ENCODE measurements at regions of chr1 and their contacts with region 1.

Region 1: DNA sequence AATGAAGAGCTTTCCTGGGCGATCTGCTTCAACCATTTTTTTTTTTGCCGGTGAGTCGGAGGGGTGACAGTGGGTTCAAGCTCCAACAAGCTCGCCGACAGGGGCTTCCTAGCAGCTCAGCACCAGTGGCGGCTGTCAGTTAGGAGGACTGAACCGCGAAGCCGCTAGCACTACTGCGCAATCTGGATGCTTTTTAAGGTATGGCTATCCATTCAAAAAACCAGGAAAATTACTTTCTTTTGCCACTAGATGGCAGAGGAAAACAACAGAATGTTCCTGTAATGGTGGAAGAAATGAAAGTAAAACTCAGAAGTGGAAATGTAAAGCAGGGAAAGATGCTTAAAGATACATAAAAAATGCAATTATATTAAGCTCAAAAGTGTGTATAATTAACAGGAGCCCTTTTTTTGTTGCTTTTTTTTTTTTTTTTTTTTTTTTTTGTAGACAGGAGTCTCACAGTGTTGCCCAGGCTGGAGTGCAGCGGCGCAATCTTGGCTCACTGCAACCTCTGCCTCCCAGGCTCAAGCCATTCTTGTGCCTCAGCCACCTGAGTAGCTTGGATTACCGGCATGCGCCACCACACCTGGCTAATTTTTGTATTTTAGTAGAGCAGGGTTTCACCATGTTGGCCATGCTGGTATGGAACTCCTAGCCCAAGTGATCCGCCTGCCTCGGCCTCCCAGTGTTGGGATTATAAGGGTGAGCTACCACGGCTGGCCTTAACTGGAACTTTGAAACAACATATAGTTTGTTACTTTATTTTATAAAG is 8.5 kb downstream of the KYAT3 start:
- DNase-seq: peak; percentile 32
- H3K4me3 Mint-ChIP-seq: peak overlapping the region; percentile 61
- H3K27ac Mint-ChIP-seq: peak overlapping the region; percentile 65
- H3K4me1 Mint-ChIP-seq: peaks cover 83% of the 10 kb centered on the region
- H3K27me3 Mint-ChIP-seq: no peaks in the 10 kb centered on the region

Region 2: DNA sequence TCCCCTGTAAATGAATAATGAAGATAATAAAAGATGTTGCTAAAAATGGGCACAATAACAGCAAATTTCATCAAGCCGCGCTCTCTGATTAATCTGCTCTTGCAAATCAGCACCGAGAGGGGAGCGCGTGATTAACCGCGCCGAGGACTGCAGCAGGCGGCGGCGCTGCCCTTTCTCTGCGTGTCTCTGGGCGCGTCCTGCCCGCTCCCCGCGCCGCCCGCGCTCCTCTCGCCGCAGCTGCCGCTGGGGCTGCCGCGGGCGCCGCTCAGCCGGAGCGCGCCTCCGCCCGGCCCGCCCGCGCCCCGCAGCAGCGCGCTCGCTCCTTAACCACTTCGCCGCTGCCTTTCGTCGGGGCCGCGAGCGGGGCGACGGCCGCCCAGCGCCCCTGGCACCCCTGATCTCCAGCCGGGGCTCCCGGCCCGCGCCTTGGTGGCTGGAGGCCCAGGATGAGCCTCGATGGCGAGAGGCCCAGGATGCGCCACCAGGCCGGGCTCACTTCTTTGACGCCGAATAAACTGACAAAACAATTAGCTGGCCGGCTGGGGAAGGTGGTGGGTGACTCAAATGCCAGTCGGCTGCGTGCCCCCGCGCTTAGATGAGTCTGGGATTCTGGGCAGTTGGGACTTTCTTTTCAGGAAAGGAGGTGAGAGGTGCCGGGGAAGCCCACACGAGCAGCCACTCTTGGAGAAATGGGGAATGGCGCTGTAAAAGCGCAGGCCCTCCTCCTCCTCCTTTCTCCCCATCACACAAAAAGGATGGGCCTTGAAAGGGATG is 521.3 kb before region 1 on chr1:
- CTCF ChIA-PET with region 1: no interaction called
- POLR2A ChIA-PET with region 1: no interaction called
- DNase-seq: no peak
- H3K4me3 Mint-ChIP-seq: no peak overlapping the region
- H3K27ac Mint-ChIP-seq: no peak overlapping the region
- H3K4me1 Mint-ChIP-seq: no peaks in the 10 kb centered on the region
- H3K27me3 Mint-ChIP-seq: peaks cover 29% of the 10 kb centered on the region

Region 3: DNA sequence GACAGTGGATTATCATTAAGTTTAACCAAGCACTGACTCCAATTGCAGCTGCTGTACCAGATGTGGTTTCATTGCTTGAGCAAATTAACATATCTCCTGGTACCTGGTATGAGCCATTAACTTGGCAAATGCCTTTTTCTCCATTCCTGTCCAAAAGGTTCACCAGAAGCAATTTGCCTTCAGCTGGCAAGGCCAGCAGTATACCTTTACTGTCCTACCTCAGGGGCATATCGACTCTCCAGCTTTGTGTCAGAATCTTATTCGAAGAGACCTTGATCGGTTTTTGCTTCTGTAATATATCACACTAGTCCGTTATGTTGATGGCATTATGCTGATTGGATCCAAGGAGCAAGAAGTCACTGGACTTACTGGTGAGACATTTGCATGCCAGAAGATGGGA is 83.1 kb before region 1 on chr1:
- CTCF ChIA-PET with region 1: no interaction called
- POLR2A ChIA-PET with region 1: no interaction called
- DNase-seq: no peak
- H3K4me3 Mint-ChIP-seq: no peak overlapping the region
- H3K27ac Mint-ChIP-seq: no peak overlapping the region
- H3K4me1 Mint-ChIP-seq: no peaks in the 10 kb centered on the region
- H3K27me3 Mint-ChIP-seq: no peaks in the 10 kb centered on the region

Region 4: GRCh38 chr1:88961647-88962275 is 22.2 kb before region 1 on chr1:
- CTCF ChIA-PET with region 1: no interaction called
- POLR2A ChIA-PET with region 1: no interaction called
- DNase-seq: no peak
- H3K4me3 Mint-ChIP-seq: no peak overlapping the region
- H3K27ac Mint-ChIP-seq: no peak overlapping the region
- H3K4me1 Mint-ChIP-seq: no peaks in the 10 kb centered on the region
- H3K27me3 Mint-ChIP-seq: no peaks in the 10 kb centered on the region

Region 5: DNA sequence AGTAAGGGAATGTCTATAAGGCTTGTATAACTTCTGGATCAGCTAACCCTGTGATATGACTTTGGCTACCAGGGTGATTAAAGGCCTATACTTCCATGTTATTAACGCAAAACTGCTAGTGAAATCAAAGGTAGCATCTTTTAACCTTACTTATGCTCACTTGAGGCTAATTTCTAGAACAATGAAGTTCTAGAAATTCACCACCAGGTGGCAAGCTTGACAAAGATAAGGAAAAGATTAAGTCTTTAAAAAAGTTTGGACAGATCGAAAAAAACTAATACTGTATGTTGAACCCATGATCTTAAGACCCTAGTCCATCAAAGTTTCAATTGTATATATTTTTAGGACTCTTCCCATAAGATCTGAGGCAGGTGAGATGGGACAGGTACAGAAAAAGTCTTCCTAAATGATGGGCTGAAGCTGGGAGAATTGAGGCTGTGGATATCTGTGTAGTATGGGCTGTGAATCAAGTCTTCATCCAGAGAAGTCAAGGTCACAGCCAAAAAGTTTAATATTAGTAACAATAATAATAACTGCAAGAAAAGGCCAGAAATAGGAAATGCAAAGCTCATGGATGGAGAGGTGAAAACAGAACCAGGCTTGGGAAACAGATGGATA is 10.3 kb before region 1 on chr1:
- CTCF ChIA-PET with region 1: interaction called, 70 read pairs
- POLR2A ChIA-PET with region 1: no interaction called
- DNase-seq: no peak
- H3K4me3 Mint-ChIP-seq: no peak overlapping the region
- H3K27ac Mint-ChIP-seq: peak overlapping the region; percentile 5
- H3K4me1 Mint-ChIP-seq: peaks cover 36% of the 10 kb centered on the region
- H3K27me3 Mint-ChIP-seq: no peaks in the 10 kb centered on the region

Region 6: DNA sequence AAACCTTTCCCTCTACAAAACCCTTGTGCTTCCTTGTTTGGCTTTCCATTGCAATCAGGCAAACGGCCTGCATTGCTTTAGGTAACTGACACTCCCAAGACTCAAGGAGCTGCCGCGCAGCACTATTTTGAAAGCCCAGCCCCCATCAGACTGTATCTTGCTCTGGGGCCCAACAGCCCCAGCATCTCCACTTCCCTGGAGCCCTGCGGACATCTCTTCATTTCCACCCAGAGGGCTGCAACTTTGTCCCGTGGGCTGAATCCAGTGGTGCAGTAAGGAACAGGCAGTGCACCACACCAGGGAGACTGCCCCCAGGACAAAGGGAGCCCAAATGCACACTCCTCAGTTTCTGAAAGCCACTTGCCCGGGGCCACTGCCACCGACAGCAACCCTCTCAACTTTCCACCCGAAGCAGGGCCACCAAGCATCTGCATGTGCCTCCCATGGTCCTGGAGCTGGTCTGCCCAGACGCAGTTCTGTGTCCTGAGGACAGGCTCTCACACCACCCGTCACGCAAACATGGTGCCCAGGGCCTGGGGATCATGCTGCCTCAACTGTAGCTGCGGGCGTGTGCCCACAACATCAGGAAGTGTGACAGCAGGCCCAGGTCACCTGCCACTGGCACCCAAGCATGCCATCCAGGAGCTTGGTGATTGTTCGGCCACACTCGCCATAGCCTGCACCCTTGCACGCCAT is 66.5 kb after region 1 on chr1:
- CTCF ChIA-PET with region 1: no interaction called
- POLR2A ChIA-PET with region 1: no interaction called
- DNase-seq: no peak
- H3K4me3 Mint-ChIP-seq: no peak overlapping the region
- H3K27ac Mint-ChIP-seq: no peak overlapping the region
- H3K4me1 Mint-ChIP-seq: peaks cover 7% of the 10 kb centered on the region
- H3K27me3 Mint-ChIP-seq: no peaks in the 10 kb centered on the region